Activated naive CD4-positive, alpha-beta T cell treated with anti-CD3 and anti-CD28 coated beads for 36 hours (primary cell): ENCODE measurements at regions of chr22 and their contacts with region 1.

Region 1: GRCh38 chr22:36977947-36978660 is 41.1 kb downstream of the TST start:
- DNase-seq: peak; percentile 95
- H3K4me3 Mint-ChIP-seq: peak overlapping the region; percentile 80
- H3K27ac Mint-ChIP-seq: peak overlapping the region; percentile 59
- H3K4me1 Mint-ChIP-seq: peaks cover 10% of the 10 kb centered on the region
- H3K27me3 Mint-ChIP-seq: peaks cover 2% of the 10 kb centered on the region

Region 2: GRCh38 chr22:36546092-36546804 is 431.9 kb before region 1 on chr22:
- CTCF ChIA-PET with region 1: interaction called, 3 read pairs
- intact Hi-C with region 1: loop called (anchors 2 kb)
- DNase-seq: peak; percentile 59
- H3K4me3 Mint-ChIP-seq: no peak overlapping the region
- H3K27ac Mint-ChIP-seq: no peak overlapping the region
- H3K4me1 Mint-ChIP-seq: peaks cover 12% of the 10 kb centered on the region
- H3K27me3 Mint-ChIP-seq: peaks cover 15% of the 10 kb centered on the region

Region 3: GRCh38 chr22:36757668-36758211 is 220.4 kb before region 1 on chr22:
- CTCF ChIA-PET with region 1: interaction called, 4 read pairs
- intact Hi-C with region 1: loop called (anchors 1 kb)
- DNase-seq: peak; percentile 90
- H3K4me3 Mint-ChIP-seq: no peak overlapping the region
- H3K27ac Mint-ChIP-seq: no peak overlapping the region
- H3K4me1 Mint-ChIP-seq: peaks cover 3% of the 10 kb centered on the region
- H3K27me3 Mint-ChIP-seq: peaks cover 5% of the 10 kb centered on the region

Region 4: GRCh38 chr22:36775964-36776669 is 202.0 kb before region 1 on chr22 and contains the start of gene IFT27:
- CTCF ChIA-PET with region 1: interaction called, 13 read pairs
- intact Hi-C with region 1: loop called (anchors 1 kb)
- DNase-seq: peak; percentile 99
- H3K4me3 Mint-ChIP-seq: peak within 1 kb of the TSS; percentile 91
- H3K27ac Mint-ChIP-seq: peak within 1 kb of the TSS; percentile 90
- H3K4me1 Mint-ChIP-seq: peaks cover 27% of the 10 kb centered on the region
- H3K27me3 Mint-ChIP-seq: no peaks in the 10 kb centered on the region
- total RNA-seq, gene IFT27: 15.7 to 16.2 TPM

Region 5: DNA sequence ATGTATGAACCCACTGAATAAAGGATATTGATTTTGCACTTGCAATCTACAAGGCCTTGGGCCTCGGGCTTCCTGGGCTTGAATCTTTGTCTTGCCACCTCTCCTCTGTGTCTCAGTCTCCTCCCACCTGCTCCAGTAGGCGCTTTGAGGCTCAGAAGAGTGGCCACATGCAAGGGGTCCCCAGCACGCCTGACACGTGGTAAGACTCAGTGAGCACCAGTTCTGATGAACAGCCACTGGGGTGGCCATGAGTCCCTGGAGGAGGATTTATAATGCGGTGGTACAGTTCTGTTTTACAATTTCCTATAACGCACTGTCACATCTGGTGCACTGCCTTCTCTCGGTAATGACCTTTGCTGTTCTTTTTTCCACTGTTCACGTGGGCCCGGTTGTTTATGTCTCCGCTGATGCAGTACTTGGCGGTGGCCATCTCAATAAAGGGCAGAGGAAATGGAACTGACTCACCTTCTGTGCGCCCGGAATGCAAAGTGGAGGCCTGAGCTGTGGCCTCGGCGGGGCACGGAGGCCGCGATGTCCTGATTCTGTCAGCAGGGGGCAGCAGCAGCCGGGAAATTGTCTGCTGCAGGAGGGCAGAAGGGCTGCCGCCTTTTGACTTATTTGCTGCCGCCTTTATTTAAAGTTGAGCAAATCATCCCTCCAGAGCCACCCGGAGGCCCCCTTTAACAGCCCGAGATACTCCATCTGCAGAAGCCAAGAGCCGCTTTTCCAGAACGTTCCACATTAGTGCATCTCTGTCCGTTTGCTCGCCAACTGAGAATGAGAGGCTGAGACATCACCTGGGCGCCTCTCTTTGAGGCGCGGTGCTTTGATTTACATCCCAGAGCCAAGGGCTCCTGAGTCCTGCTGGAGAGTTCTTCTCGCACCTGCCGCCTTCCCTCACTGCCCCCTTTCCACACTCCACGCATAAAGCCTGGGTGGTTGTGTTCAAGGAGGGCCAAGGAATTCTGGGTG is 196.2 kb before region 1 on chr22:
- CTCF ChIA-PET with region 1: interaction called, 13 read pairs
- intact Hi-C with region 1: loop called (anchors 1 kb)
- DNase-seq: peak; percentile 94
- H3K4me3 Mint-ChIP-seq: peak overlapping the region; percentile 28
- H3K27ac Mint-ChIP-seq: peak overlapping the region; percentile 72
- H3K4me1 Mint-ChIP-seq: peaks cover 26% of the 10 kb centered on the region
- H3K27me3 Mint-ChIP-seq: peaks cover 3% of the 10 kb centered on the region

Region 6: GRCh38 chr22:36873680-36874537 is 104.2 kb before region 1 on chr22:
- CTCF ChIA-PET with region 1: no interaction called
- intact Hi-C with region 1: loop called (anchors 5 kb)
- DNase-seq: peak; percentile 38
- H3K4me3 Mint-ChIP-seq: no peak overlapping the region
- H3K27ac Mint-ChIP-seq: no peak overlapping the region
- H3K4me1 Mint-ChIP-seq: peaks cover 11% of the 10 kb centered on the region
- H3K27me3 Mint-ChIP-seq: no peaks in the 10 kb centered on the region